H1 (cell line): ENCODE measurements at regions of chr12 and their contacts with region 1.

Region 1: GRCh38 chr12:44972746-44973421 is 78.0 kb downstream of the DBX2 start:
- DNase-seq: no peak
- H3K4me3 ChIP-seq: no peak overlapping the region
- H3K27ac ChIP-seq: no peak overlapping the region
- H3K4me1 ChIP-seq: no peaks in the 10 kb centered on the region
- H3K27me3 ChIP-seq: no peaks in the 10 kb centered on the region
- CTCF ChIP-seq: peak; percentile 69 to 77 (median 75)
- EP300 ChIP-seq: no peak
- POLR2A ChIP-seq: no peak
- RAD21 ChIP-seq: peak; percentile 68 to 71

Region 2: GRCh38 chr12:44930972-44931600 is 41.8 kb before region 1 on chr12:
- CTCF ChIA-PET with region 1: no interaction called
- POLR2A ChIA-PET with region 1: no interaction called
- DNase-seq: no peak
- H3K4me3 ChIP-seq: peak overlapping the region in 1 of 4 experiments; percentile 1; a peak in 1 of 8 replicates
- H3K27ac ChIP-seq: no peak overlapping the region
- H3K4me1 ChIP-seq: no peaks in the 10 kb centered on the region
- H3K27me3 ChIP-seq: no peaks in the 10 kb centered on the region
- CTCF ChIP-seq: peak in 2 of 3 experiments; percentile 34 to 45; a peak in 2 of 4 replicates
- EP300 ChIP-seq: no peak
- POLR2A ChIP-seq: no peak
- RAD21 ChIP-seq: peak; percentile 63 to 73

Region 3: DNA sequence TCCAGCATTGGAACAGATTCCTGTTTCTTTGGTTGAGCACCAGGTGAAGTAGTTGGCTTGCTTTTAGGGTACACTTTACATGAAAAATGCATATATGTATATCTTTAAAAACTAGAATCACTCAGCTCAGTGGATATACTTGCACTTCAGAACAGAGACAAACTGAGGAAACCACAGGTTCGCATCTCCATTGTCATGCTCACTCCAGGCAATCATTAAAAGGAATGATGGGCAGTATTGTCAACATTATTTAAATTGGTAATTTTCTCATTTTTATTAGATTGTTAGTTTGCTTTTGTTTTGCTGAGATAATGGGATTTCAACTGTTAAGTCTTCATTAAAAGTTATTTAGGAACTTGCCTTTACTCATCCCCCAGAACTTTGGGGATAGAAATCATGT is 25.7 kb before region 1 on chr12:
- CTCF ChIA-PET with region 1: interaction called, 17 read pairs
- POLR2A ChIA-PET with region 1: no interaction called
- DNase-seq: no peak
- H3K4me3 ChIP-seq: peak overlapping the region in 1 of 4 experiments; percentile 37; a peak in 1 of 8 replicates
- H3K27ac ChIP-seq: no peak overlapping the region
- H3K4me1 ChIP-seq: peaks cover 0 to 10% (median 0%) of the 10 kb centered on the region in 4 experiments; a peak in 2 of 7 replicates
- H3K27me3 ChIP-seq: no peaks in the 10 kb centered on the region
- CTCF ChIP-seq: no peak
- EP300 ChIP-seq: no peak
- POLR2A ChIP-seq: no peak
- RAD21 ChIP-seq: no peak

Region 4: GRCh38 chr12:44960856-44961255 is 12.0 kb before region 1 on chr12:
- CTCF ChIA-PET with region 1: interaction called, 32 read pairs
- POLR2A ChIA-PET with region 1: no interaction called
- DNase-seq: peak in 1 of 2 experiments; percentile 61
- H3K4me3 ChIP-seq: no peak overlapping the region; a peak in 1 of 8 replicates
- H3K27ac ChIP-seq: no peak overlapping the region
- H3K4me1 ChIP-seq: peaks cover 2 to 8% (median 5%) of the 10 kb centered on the region in 4 experiments; a peak in 6 of 7 replicates
- H3K27me3 ChIP-seq: no peaks in the 10 kb centered on the region
- CTCF ChIP-seq: peak; percentile 53 to 70 (median 70)
- EP300 ChIP-seq: no peak
- POLR2A ChIP-seq: no peak
- RAD21 ChIP-seq: peak; percentile 28 to 52; a peak in 3 of 4 replicates

Region 5: DNA sequence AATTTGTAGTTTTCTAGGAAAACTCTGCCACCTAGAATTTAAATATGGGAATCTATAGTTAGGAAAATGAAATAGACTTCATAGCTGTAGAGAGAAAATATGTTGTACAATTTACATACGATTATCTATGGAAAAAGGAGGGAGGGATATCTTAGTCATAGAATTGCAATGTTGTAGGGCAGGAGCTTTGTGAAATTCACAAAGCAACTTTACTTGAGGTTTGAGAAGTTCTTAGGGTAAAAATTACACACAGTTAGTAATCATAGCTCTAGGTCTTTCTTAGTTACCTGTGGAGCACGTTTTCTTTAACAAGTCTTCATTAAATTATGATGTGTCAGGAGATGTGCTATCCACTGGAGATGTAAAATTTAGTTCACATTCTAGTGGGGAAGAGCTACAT is 139.4 kb after region 1 on chr12:
- CTCF ChIA-PET with region 1: interaction called, 18 read pairs
- POLR2A ChIA-PET with region 1: no interaction called
- DNase-seq: no peak
- H3K4me3 ChIP-seq: no peak overlapping the region
- H3K27ac ChIP-seq: no peak overlapping the region
- H3K4me1 ChIP-seq: no peaks in the 10 kb centered on the region
- H3K27me3 ChIP-seq: no peaks in the 10 kb centered on the region
- CTCF ChIP-seq: no peak
- EP300 ChIP-seq: no peak
- POLR2A ChIP-seq: no peak
- RAD21 ChIP-seq: no peak

Region 6: GRCh38 chr12:45122768-45123380 is 150.0 kb after region 1 on chr12:
- CTCF ChIA-PET with region 1: interaction called, 64 read pairs
- POLR2A ChIA-PET with region 1: no interaction called
- DNase-seq: no peak
- H3K4me3 ChIP-seq: no peak overlapping the region
- H3K27ac ChIP-seq: no peak overlapping the region
- H3K4me1 ChIP-seq: no peaks in the 10 kb centered on the region
- H3K27me3 ChIP-seq: no peaks in the 10 kb centered on the region
- CTCF ChIP-seq: peak in 2 of 3 experiments; percentile 60 to 71; a peak in 3 of 4 replicates
- EP300 ChIP-seq: no peak
- POLR2A ChIP-seq: no peak
- RAD21 ChIP-seq: peak; percentile 85 to 88